Ascending aorta (tissue), 2 donors: ENCODE measurements at regions of chr15 and their contacts with region 1.

Region 1: GRCh38 chr15:59492389-59493377 is 54.7 kb downstream of the FAM81A start:
- DNase-seq: peak in 1 of 2 donors; percentile 76
- H3K4me3 ChIP-seq: peak overlapping the region in 1 of 2 donors; percentile 34
- H3K27ac ChIP-seq: no peak overlapping the region
- H3K4me1 ChIP-seq: peaks cover 0 to 2% of the 10 kb centered on the region in 2 donors
- H3K27me3 ChIP-seq: no peaks in the 10 kb centered on the region
- CTCF ChIP-seq: peak; percentile 77 to 90 (median 77)

Region 2: DNA sequence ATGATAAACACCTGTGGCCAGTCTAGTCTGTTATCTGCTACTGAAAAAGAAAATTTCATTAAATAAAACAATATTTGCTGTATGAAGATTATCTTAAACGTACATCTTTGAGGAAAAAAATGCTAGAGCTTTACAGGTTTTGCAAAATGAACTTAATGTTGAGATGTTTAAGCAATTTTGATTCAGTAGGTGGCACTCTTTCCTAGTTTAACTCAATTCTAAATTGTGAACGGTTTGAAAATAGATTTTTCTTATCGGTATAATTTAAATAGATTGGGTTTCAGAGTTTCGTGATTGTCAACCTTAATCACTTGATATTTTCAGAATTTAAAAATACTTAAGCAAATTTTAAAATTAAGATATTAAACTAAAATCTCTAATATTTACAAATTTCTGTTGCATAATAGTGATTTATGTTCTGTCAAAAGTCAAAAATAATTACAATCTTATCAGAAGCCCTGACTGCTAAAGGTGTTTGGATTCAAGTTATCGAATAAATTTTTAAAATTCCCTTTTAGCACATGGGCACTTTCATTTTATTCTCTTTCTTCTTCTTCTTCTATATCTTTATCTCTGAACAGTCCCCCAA is 512.2 kb before region 1 on chr15:
- intact Hi-C with region 1: loop called (anchors 1 kb)
- DNase-seq: no peak
- H3K4me3 ChIP-seq: no peak overlapping the region
- H3K27ac ChIP-seq: no peak overlapping the region
- H3K4me1 ChIP-seq: no peaks in the 10 kb centered on the region
- H3K27me3 ChIP-seq: no peaks in the 10 kb centered on the region
- CTCF ChIP-seq: peak; percentile 22 to 61 (median 47)

Region 3: GRCh38 chr15:59104912-59105732 is 387.6 kb before region 1 on chr15 and contains the start of gene CCNB2:
- intact Hi-C with region 1: loop called (anchors 10 kb)
- DNase-seq: peak; percentile 51 to 91
- H3K4me3 ChIP-seq: peak within 1 kb of the TSS; percentile 64 to 71
- H3K27ac ChIP-seq: no peak within 1 kb of the TSS
- H3K4me1 ChIP-seq: peaks cover 0 to 3% of the 10 kb centered on the region in 2 donors
- H3K27me3 ChIP-seq: no peaks in the 10 kb centered on the region
- CTCF ChIP-seq: no peak
- total RNA-seq, gene CCNB2: not detected

Region 4: GRCh38 chr15:59148153-59148833 is 344.4 kb before region 1 on chr15:
- intact Hi-C with region 1: loop called (anchors 10 kb)
- DNase-seq: no peak
- H3K4me3 ChIP-seq: no peak overlapping the region
- H3K27ac ChIP-seq: peak overlapping the region; percentile 12 to 40
- H3K4me1 ChIP-seq: peaks cover 7 to 13% of the 10 kb centered on the region in 2 donors
- H3K27me3 ChIP-seq: no peaks in the 10 kb centered on the region
- CTCF ChIP-seq: no peak

Region 5: DNA sequence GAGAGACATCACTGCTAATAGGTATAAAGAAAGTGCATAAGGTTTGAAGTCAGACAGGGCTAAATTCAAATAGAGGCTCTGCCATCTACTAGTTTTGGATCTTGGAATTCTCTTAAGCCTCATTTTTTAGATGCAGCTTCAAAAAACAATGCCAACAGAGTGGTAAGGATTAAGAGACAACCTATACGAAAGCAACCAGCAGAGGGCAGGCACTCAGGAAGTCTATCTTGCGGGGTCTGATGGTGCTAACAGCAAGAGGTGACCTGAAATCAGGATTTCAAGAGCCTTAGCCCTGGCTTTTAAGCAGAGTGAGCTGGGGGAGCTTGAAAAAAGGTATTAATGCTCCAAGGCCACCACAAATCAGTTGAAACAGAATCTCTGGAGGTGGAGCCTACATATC is 245.3 kb before region 1 on chr15:
- intact Hi-C with region 1: loop called (anchors 5 kb)
- DNase-seq: peak in 1 of 2 donors; percentile 75
- H3K4me3 ChIP-seq: no peak overlapping the region
- H3K27ac ChIP-seq: no peak overlapping the region
- H3K4me1 ChIP-seq: no peaks in the 10 kb centered on the region
- H3K27me3 ChIP-seq: no peaks in the 10 kb centered on the region
- CTCF ChIP-seq: peak; percentile 41 to 45 (median 45)

Region 6: DNA sequence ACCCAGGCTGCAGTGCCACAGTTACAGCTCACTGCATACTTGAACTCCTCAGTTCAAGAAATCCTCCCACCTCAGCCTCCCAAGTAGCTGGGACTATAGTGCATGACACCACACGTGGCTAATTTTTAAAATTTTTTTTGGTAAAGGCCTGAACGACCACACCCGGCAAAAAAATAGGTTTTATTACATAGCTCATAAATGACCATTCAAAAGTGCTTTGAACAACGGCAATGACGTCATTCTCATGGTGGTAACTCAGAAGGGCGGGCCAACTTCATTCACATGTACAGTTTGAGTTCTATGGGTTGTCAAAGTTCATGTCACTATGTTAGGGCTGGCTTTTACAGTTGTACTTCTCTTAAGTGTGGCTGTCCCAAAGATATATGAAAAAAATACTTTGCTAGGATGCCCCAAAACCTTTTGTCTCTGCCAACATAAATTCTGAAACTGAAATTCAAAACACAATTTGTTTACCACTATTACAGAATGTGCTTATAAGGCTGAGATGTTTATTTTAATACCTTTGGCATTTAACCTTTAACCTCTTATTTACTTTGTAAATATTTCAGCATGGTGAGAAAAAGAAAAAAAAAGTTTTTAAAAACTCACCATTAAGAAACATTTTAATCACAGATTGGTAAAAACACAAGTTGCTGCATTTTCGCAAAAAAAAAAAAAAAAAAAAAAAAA is 126.2 kb before region 1 on chr15:
- intact Hi-C with region 1: loop called (anchors 5 kb)
- DNase-seq: no peak
- H3K4me3 ChIP-seq: no peak overlapping the region
- H3K27ac ChIP-seq: no peak overlapping the region
- H3K4me1 ChIP-seq: peaks cover 0 to 8% of the 10 kb centered on the region in 2 donors
- H3K27me3 ChIP-seq: no peaks in the 10 kb centered on the region
- CTCF ChIP-seq: no peak

Region 7: GRCh38 chr15:59461521-59461920 is 31.2 kb before region 1 on chr15:
- intact Hi-C with region 1: no loop called
- DNase-seq: no peak
- H3K4me3 ChIP-seq: no peak overlapping the region
- H3K27ac ChIP-seq: no peak overlapping the region
- H3K4me1 ChIP-seq: no peaks in the 10 kb centered on the region
- H3K27me3 ChIP-seq: no peaks in the 10 kb centered on the region
- CTCF ChIP-seq: no peak

Region 8: GRCh38 chr15:59543721-59544547 is 51.3 kb after region 1 on chr15:
- intact Hi-C with region 1: no loop called
- DNase-seq: no peak
- H3K4me3 ChIP-seq: no peak overlapping the region
- H3K27ac ChIP-seq: no peak overlapping the region
- H3K4me1 ChIP-seq: no peaks in the 10 kb centered on the region
- H3K27me3 ChIP-seq: no peaks in the 10 kb centered on the region
- CTCF ChIP-seq: no peak